Activated T-helper 2 cell treated with anti-CD3 and anti-CD28 coated beads, Interferon-gamma antibody, Interleukin-2, Interleukin-4, amounts not matched to agents 10 μg/mL and 5 μg/mL and 100 μg/mL, durations not matched to agents 14 hours and 24 hours and 36 hours (primary cell): ENCODE measurements at regions of chr12 and their contacts with region 1.

Region 1: DNA sequence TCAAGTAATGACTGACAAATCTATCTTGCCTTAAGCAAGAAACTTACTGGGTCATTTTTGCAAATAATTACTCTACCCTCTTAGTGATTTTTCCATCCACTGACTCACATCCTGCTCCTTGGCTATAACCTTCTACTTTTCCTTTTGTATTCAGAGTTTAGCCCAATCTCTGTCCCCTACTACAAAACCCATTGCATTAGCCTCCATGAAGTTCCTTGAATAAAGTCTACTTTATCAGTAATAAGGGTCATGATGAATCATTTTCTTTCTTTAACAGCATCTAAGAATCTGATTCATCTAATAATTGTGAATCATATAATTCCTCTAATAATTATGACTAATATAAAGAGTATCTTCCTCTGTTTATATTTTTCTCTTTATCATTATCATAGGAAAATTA is 132.6 kb downstream of the NTS start:
- DNase-seq: no peak
- H3K4me3 Mint-ChIP-seq: no peak overlapping the region
- H3K27ac Mint-ChIP-seq: no peak overlapping the region
- H3K4me1 Mint-ChIP-seq: no peaks in the 10 kb centered on the region
- H3K27me3 Mint-ChIP-seq: no peaks in the 10 kb centered on the region

Region 2: DNA sequence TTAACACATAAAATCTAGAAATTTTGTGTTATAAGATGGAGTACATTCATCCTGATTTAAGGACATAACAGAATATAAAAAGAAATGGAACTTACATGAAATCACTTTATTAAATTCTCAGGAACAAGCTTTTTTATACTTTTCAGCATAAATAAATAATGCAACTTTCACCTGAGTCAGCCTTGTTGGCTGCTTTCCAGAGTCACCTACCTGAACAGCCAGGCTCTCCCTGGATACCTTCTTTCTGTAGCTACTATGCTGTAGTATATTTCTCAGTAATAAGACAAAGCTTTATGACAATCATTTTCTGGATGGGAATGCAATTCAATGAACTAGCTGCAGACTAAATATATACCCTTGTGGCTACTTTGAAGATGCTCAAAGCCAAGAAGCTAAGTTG is 20.7 kb before region 1 on chr12:
- intact Hi-C with region 1: loop called (anchors 1 kb)
- DNase-seq: no peak
- H3K4me3 Mint-ChIP-seq: no peak overlapping the region
- H3K27ac Mint-ChIP-seq: no peak overlapping the region
- H3K4me1 Mint-ChIP-seq: no peaks in the 10 kb centered on the region
- H3K27me3 Mint-ChIP-seq: no peaks in the 10 kb centered on the region